HepG2 (cell line): ENCODE measurements at regions of chr20 and their contacts with region 1.

Region 1: GRCh38 chr20:51894619-51895018 is 92.3 kb upstream of the SALL4 start:
- DNase-seq: no peak
- ATAC-seq: peak; percentile 62
- H3K4me3 ChIP-seq: no peak overlapping the region
- H3K27ac ChIP-seq: no peak overlapping the region
- H3K4me1 ChIP-seq: peaks cover 15% of the 10 kb centered on the region
- H3K27me3 ChIP-seq: 0 out of 5 replicates have a peak, but pooled peaks cover 0 to 3% of the 10 kb centered on the region in 2 experiments
- CTCF ChIP-seq: no peak
- EP300 ChIP-seq: no peak
- POLR2A ChIP-seq: no peak
- RAD21 ChIP-seq: no peak

Region 2: DNA sequence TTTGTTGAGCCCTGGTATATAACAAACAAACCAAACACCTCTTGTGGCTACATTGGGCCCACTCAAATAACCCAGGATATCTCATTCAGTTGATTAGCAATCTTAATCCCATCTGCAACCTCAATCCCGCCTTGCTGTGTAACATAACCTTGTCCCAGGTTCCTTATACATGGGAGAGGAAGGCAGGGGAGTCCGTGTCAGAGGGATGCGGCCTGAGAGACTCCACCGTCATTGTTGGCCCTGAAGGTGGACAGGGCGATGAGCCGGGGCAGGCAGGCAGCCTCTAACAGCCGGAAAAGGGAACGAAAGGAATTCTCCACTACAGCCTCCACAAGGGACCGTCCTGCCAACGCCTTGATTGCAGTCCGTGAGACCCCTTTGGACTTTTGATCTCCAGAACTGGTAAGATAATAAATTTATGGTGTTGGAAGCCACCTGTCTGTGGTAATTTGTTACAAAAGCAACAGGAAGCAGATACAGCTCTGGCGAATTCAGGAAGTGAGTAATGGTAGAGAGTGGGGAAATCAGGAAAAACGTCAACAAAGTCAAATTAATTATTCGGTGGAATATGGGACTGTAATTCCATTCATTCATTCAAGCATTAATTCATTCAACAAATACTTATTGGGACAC is 32.2 kb after region 1 on chr20:
- CTCF ChIA-PET with region 1: no interaction called
- POLR2A ChIA-PET with region 1: no interaction called
- in situ Hi-C with region 1: no loop called
- intact Hi-C with region 1: loop called (anchors 1 kb)
- DNase-seq: no peak
- ATAC-seq: no peak
- H3K4me3 ChIP-seq: no peak overlapping the region
- H3K27ac ChIP-seq: no peak overlapping the region
- H3K4me1 ChIP-seq: peaks cover 12% of the 10 kb centered on the region
- H3K27me3 ChIP-seq: 0 out of 5 replicates have a peak, but pooled peaks cover 0 to 3% of the 10 kb centered on the region in 2 experiments
- CTCF ChIP-seq: no peak
- EP300 ChIP-seq: no peak
- POLR2A ChIP-seq: no peak
- RAD21 ChIP-seq: no peak